ENCODE measurements at regions of chr4 and their contacts with region 1.

Region 1: DNA sequence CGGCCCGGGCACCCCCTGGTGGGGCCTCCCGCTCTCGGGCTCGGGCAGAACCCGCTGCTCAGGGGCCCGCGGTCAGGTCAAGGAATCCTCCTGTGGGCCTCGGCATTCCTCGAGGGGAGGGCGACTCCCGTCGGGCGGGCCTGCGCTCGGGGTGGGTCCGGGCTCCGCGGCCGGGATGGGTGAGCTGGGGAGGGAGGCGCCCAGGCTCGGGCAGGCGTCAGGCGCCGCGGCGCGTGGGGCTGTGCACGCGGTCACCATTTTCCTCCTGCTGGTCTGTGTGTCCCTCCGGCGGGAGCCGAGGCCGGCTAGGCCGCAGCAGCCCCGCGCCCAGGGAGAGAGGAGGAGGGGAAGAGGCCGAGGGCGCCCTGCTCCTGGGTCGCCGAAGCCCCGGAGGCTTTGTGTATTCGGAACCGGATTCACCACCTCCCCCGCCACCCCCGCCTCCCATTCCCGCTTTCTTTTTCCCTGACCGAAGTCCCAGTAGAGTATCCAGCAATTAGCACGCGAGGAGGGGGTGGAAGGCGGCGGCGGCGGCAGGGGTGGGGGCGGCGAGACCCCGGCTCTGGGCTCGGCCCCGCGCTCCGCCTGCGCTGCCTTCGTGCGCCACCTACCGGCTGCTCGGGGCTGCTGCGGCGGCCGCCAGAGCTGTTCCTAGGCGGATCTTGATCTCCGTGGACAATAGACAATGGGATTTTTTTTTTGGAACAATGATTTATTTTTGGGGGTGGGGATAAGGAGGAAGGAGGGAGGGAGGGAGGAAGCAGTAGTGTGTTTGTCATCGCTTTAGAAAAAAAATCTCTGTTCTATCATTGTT is 99.0 kb upstream of the MAML3 start:
- DNase-seq: peak; percentile 75
- ATAC-seq: peak; percentile 81
- H3K4me3 ChIP-seq: peak overlapping the region in 4 of 5 experiments; percentile 50 to 78 (median 68)
- H3K4me3 Mint-ChIP-seq: peak overlapping the region; percentile 78
- H3K27ac ChIP-seq: peak overlapping the region in 1 of 2 donors; percentile 11
- H3K27ac Mint-ChIP-seq: no peak overlapping the region
- H3K4me1 ChIP-seq: peaks cover 9 to 15% of the 10 kb centered on the region in 2 donors
- H3K4me1 Mint-ChIP-seq: peaks cover 10% of the 10 kb centered on the region
- H3K27me3 ChIP-seq: peaks cover 0 to 16% (median 5%) of the 10 kb centered on the region in 4 experiments
- H3K27me3 Mint-ChIP-seq: peaks cover 43% of the 10 kb centered on the region
- CTCF ChIP-seq: peak; percentile 94

Region 2: GRCh38 chr4:139603576-139604387 is 649.2 kb before region 1 on chr4:
- CTCF ChIA-PET with region 1: interaction called, 9 read pairs
- POLR2A ChIA-PET with region 1: no interaction called
- intact Hi-C with region 1: loop called (anchors 2 kb)
- DNase-seq: peak; percentile 63
- ATAC-seq: peak; percentile 39
- H3K4me3 ChIP-seq: no peak overlapping the region
- H3K4me3 Mint-ChIP-seq: no peak overlapping the region
- H3K27ac ChIP-seq: no peak overlapping the region
- H3K27ac Mint-ChIP-seq: no peak overlapping the region
- H3K4me1 ChIP-seq: peaks cover 8 to 10% of the 10 kb centered on the region in 2 donors
- H3K4me1 Mint-ChIP-seq: peaks cover 16% of the 10 kb centered on the region
- H3K27me3 ChIP-seq: peaks cover 0 to 2% (median 0%) of the 10 kb centered on the region in 4 experiments
- H3K27me3 Mint-ChIP-seq: peaks cover 14% of the 10 kb centered on the region
- CTCF ChIP-seq: peak; percentile 59

Region 3: DNA sequence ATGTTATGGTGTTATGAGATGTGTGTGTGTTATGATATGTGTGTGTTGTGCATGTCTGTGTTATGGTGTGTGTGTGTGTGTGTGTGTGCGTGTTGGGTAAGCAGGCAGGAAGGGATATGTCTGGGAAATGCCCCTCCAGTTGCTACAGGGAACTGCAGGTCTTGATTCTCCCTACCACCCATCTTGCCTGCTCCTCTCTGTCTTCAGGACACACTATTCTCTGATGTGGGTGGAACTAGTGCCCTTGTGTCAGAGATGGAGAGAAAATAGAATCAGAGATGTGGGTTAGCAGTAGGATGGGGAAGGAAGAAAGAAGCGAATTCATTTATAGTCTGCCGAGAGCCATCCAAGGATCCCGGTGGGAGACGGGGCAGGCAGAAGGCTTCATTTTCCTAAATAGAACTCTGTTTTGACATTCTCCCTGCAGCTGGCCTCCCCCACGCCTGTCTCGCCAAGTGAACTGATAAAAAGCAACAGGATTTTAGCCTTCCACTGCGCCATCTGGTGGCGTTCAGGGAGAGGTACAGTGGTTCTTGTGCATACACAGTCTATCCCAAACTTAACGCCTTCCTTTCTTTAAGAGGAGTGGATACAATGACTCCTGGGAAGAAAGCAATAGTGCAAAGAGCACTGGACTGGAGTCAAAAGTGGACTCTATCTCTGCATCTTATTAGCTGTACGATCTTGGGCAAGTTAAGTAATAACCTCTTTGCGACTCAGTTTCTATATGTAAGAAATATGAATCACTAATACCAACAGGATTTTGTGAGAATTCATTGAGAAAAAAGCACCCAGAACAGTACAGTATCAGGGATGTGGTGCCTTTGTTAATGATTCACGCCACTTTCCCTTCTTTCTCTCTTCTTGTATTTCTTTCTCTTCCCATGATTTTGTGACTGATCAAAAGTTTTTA is 601.4 kb before region 1 on chr4:
- CTCF ChIA-PET with region 1: interaction called, 36 read pairs
- POLR2A ChIA-PET with region 1: no interaction called
- intact Hi-C with region 1: loop called (anchors 1 kb)
- DNase-seq: peak; percentile 82
- ATAC-seq: peak; percentile 81
- H3K4me3 ChIP-seq: no peak overlapping the region
- H3K4me3 Mint-ChIP-seq: no peak overlapping the region
- H3K27ac ChIP-seq: no peak overlapping the region
- H3K27ac Mint-ChIP-seq: no peak overlapping the region
- H3K4me1 ChIP-seq: no peaks in the 10 kb centered on the region
- H3K4me1 Mint-ChIP-seq: peaks cover 4% of the 10 kb centered on the region
- H3K27me3 ChIP-seq: no peaks in the 10 kb centered on the region
- H3K27me3 Mint-ChIP-seq: peaks cover 15% of the 10 kb centered on the region
- CTCF ChIP-seq: peak; percentile 98

Region 4: GRCh38 chr4:139734875-139735380 is 518.0 kb before region 1 on chr4:
- CTCF ChIA-PET with region 1: interaction called, 51 read pairs
- POLR2A ChIA-PET with region 1: no interaction called
- intact Hi-C with region 1: loop called (anchors 1 kb)
- DNase-seq: peak; percentile 86
- ATAC-seq: peak; percentile 84
- H3K4me3 ChIP-seq: peak overlapping the region; percentile 33 to 78 (median 51)
- H3K4me3 Mint-ChIP-seq: peak overlapping the region; percentile 86
- H3K27ac ChIP-seq: peak overlapping the region in 1 of 2 donors; percentile 48
- H3K27ac Mint-ChIP-seq: no peak overlapping the region
- H3K4me1 ChIP-seq: peaks cover 17 to 23% of the 10 kb centered on the region in 2 donors
- H3K4me1 Mint-ChIP-seq: peaks cover 17% of the 10 kb centered on the region
- H3K27me3 ChIP-seq: peaks cover 0 to 27% (median 19%) of the 10 kb centered on the region in 4 experiments
- H3K27me3 Mint-ChIP-seq: peaks cover 35% of the 10 kb centered on the region
- CTCF ChIP-seq: peak; percentile 72

Region 5: DNA sequence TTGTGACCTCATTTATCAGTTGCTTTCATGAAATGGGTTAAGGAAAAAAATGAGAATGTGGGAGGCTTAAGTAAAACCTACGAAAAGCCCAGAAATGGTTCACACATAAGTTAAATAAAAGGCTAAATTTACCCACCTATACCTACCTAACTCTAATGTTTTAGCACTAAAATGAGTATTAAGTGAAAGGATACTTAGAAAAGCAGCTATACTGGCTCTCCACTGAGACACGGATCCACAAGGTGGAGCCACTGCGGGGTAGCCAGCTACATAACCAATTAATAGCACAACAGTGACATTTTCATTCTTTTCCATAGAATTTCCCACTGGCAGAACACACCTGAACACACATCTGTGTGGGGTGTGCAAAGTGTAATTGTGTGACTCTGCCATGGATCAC is 200.9 kb before region 1 on chr4:
- CTCF ChIA-PET with region 1: interaction called, 37 read pairs
- POLR2A ChIA-PET with region 1: no interaction called
- intact Hi-C with region 1: loop called (anchors 1 kb)
- DNase-seq: peak; percentile 44
- ATAC-seq: no peak
- H3K4me3 ChIP-seq: no peak overlapping the region
- H3K4me3 Mint-ChIP-seq: no peak overlapping the region
- H3K27ac ChIP-seq: no peak overlapping the region
- H3K27ac Mint-ChIP-seq: no peak overlapping the region
- H3K4me1 ChIP-seq: peaks cover 32 to 34% of the 10 kb centered on the region in 2 donors
- H3K4me1 Mint-ChIP-seq: peaks cover 47% of the 10 kb centered on the region
- H3K27me3 ChIP-seq: no peaks in the 10 kb centered on the region
- H3K27me3 Mint-ChIP-seq: peaks cover 44% of the 10 kb centered on the region
- CTCF ChIP-seq: peak; percentile 43

Region 6: DNA sequence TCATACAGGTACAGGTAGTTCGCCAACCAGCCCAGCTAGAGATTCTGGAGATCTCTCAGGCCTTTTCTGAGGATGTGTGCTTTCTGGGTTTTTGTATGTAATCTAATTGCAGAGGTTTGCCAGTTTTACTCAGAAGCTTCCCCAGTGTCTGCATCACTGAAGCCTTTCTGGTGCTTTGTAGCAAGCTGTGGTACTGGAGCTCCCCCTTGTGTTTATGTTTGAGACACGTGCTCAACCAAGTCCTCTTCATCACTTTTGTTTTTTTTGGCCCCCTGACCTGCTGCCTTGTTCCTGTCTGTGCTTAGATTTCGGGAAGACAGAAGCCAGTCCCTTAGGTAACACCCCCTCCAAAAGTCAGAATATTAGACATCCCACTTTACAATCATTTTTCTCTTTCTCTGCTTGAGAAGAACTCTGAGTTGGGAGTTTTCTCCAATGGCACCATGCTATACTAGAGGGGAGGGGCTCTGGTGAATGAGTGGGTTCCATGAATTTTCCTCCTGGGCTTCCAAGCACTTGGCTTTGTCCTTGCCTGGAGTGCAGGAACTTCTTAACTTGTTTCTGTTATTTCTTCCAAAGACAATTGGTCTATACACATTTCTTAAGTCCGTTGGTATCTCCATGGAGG is 631.6 kb after region 1 on chr4:
- CTCF ChIA-PET with region 1: no interaction called
- POLR2A ChIA-PET with region 1: no interaction called
- intact Hi-C with region 1: loop called (anchors 5 kb)
- DNase-seq: peak; percentile 76
- ATAC-seq: peak; percentile 67
- H3K4me3 ChIP-seq: no peak overlapping the region
- H3K4me3 Mint-ChIP-seq: no peak overlapping the region
- H3K27ac ChIP-seq: no peak overlapping the region
- H3K27ac Mint-ChIP-seq: peak overlapping the region; percentile 38
- H3K4me1 ChIP-seq: no peaks in the 10 kb centered on the region
- H3K4me1 Mint-ChIP-seq: peaks cover 3% of the 10 kb centered on the region
- H3K27me3 ChIP-seq: peaks cover 0 to 17% (median 0%) of the 10 kb centered on the region in 4 experiments
- H3K27me3 Mint-ChIP-seq: peaks cover 29% of the 10 kb centered on the region
- CTCF ChIP-seq: peak; percentile 79